ENCODE measurements at regions of chr9 and their contacts with region 1.

Region 1: GRCh38 chr9:76458903-76459690 is at the start of gene GCNT1:
- DNase-seq: peak; percentile 92
- H3K4me3 Mint-ChIP-seq: peak within 1 kb of the TSS; percentile 87
- H3K27ac Mint-ChIP-seq: peak within 1 kb of the TSS; percentile 91
- H3K4me1 Mint-ChIP-seq: peaks cover 35% of the 10 kb centered on the region
- H3K27me3 Mint-ChIP-seq: peaks cover 3% of the 10 kb centered on the region
- total RNA-seq, gene GCNT1: 11.6 and 13.1 TPM in 2 replicates

Region 2: DNA sequence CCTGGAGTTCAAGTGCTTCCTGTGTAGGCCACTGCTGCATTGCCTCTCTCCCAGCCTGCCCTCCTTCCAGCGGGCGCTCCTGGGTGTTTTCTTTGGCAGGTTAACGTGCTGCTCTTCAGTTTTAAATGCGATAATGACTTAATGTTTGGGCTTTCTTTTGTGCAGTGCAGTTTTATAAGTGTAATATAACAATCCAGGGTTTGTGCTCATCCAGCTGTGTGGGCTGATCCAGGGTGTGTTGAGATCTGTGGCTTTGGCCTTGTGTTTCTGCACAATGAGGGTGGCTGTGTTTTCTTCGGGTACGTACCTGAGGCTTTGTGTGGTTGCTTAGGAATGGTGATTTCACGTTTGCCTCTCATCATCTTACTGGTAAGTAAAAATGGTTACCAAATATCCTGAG is 518.0 kb before region 1 on chr9:
- intact Hi-C with region 1: no loop called
- DNase-seq: no peak
- H3K4me3 Mint-ChIP-seq: no peak overlapping the region
- H3K27ac Mint-ChIP-seq: no peak overlapping the region
- H3K4me1 Mint-ChIP-seq: peaks cover 7% of the 10 kb centered on the region
- H3K27me3 Mint-ChIP-seq: no peaks in the 10 kb centered on the region

Region 3: DNA sequence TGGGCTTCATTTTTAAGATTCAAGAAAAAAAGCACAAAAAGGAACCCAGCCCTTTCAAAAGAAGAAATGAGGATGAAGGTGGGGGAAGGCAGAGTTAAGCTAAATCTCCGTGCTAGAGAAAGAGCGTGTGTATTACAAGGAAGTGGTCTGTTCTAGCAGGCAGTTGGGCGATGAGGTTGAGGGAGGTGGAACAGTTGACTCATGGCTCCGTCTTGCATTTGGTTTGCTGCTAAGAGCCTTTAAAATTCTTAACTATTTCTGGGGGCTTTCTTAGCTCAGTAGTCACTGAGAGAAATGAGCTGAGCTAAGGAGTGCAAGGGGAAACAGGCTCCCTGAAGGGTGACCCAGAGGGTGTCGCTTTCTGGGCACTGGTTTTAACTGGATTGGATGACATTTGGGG is 117.2 kb after region 1 on chr9:
- intact Hi-C with region 1: loop called (anchors 1 kb)
- DNase-seq: peak; percentile 59
- H3K4me3 Mint-ChIP-seq: peak overlapping the region; percentile 25
- H3K27ac Mint-ChIP-seq: peak overlapping the region; percentile 89
- H3K4me1 Mint-ChIP-seq: peaks cover 34% of the 10 kb centered on the region
- H3K27me3 Mint-ChIP-seq: peaks cover 1% of the 10 kb centered on the region